Activated CD4-positive, alpha-beta T cell treated with anti-CD3 and anti-CD28 coated beads, Interleukin-2, amount 10 ng/mL, durations not matched to agents 24 days and 14 days (primary cell): ENCODE measurements at regions of chr9 and their contacts with region 1.

Region 1: DNA sequence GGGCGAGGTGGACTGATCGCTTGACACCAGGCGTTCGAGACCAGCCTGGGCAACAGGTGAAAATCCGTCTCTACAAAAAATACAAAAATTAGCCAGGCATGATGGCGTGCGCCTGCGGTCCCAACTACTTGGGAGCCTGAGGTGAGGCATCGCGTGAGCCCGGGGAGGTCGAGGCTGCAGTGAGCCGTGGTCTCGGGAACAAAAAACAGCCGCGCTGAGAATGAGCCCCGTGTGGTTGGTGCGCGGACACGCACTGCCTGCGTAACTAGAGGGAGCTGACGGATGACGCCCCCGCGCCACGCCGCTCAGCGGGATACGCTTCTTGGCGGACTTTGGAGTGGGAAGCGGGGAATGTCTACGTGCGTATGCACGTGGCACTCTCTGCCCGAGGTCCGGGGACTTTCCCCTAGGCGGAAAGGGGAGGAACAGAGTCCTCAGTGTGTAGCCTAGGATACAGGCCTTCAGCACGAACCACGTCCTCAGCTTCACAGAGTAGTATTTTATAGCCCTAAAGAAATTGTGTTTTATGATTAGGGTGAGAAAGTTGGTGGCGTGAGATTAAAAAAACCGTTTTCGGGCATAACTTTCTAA is at the start of gene RMRP:
- DNase-seq: peak; percentile 96
- H3K4me3 Mint-ChIP-seq: peak within 1 kb of the TSS; percentile 92
- H3K27ac Mint-ChIP-seq: peak within 1 kb of the TSS; percentile 99
- H3K4me1 Mint-ChIP-seq: peaks cover 58% of the 10 kb centered on the region
- H3K27me3 Mint-ChIP-seq: peaks cover 7% of the 10 kb centered on the region
- total RNA-seq, gene RMRP: 5,949 and 6,301 TPM in 2 replicates

Region 2: DNA sequence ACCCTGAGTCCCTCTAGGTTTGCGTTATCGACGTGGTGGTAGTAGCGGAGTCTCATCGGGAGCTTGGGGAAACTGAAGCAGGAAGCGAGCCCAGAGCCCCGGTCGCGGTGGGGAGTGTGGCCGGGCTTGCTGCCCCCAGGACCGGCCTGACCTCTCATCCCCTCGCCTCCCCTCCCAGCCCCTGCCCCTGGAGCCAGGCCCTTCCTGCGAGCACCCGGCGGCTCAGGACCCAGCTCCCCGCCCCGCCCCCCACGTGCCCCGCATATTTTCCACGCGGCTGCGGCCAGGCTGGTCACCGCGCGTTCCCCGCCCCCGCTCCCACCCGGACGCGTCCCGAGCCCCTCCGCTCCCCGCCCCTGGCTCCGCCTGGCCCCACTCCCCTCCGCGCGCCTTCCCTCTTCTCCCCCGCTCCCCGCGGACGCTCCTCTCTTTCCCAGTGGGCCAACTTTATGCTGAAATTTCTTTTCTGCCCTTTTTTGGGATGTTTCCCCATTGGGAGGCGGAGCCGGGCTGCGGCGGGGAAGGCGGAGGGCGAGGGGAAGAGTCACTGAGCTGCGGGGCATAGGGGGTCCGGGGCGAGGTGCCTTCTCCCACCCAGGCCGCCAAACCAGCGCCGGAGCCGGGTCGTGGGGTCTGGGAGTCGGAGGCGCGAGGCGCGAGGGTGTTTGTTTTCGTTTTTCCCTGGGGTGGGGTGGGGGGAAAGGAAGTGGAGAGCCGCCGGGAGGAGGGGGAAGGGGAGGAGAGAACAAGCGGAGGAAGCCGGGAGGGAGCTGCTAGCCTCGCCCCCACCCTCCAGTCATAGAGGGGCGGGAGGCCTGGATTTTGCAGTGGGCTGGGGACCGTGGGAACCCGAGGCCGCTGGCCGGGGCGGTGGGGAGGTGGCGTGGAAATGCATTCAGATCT is 33.0 kb after region 1 on chr9:
- intact Hi-C with region 1: loop called (anchors 2 kb)
- DNase-seq: peak; percentile 79
- H3K4me3 Mint-ChIP-seq: peak overlapping the region; percentile 86
- H3K27ac Mint-ChIP-seq: peak overlapping the region; percentile 81
- H3K4me1 Mint-ChIP-seq: peaks cover 21% of the 10 kb centered on the region
- H3K27me3 Mint-ChIP-seq: no peaks in the 10 kb centered on the region